PC-9 (cell line): ENCODE measurements at regions of chr20 and their contacts with region 1.

Region 1: GRCh38 chr20:47847868-47848531 is 62.7 kb upstream of the SULF2 start:
- DNase-seq: peak in 1 of 2 experiments; percentile 37
- H3K4me3 ChIP-seq: no peak overlapping the region
- H3K27ac ChIP-seq: peak overlapping the region; percentile 95
- H3K4me1 ChIP-seq: peaks cover 69% of the 10 kb centered on the region
- H3K27me3 ChIP-seq: no peaks in the 10 kb centered on the region
- CTCF ChIP-seq: no peak

Region 2: DNA sequence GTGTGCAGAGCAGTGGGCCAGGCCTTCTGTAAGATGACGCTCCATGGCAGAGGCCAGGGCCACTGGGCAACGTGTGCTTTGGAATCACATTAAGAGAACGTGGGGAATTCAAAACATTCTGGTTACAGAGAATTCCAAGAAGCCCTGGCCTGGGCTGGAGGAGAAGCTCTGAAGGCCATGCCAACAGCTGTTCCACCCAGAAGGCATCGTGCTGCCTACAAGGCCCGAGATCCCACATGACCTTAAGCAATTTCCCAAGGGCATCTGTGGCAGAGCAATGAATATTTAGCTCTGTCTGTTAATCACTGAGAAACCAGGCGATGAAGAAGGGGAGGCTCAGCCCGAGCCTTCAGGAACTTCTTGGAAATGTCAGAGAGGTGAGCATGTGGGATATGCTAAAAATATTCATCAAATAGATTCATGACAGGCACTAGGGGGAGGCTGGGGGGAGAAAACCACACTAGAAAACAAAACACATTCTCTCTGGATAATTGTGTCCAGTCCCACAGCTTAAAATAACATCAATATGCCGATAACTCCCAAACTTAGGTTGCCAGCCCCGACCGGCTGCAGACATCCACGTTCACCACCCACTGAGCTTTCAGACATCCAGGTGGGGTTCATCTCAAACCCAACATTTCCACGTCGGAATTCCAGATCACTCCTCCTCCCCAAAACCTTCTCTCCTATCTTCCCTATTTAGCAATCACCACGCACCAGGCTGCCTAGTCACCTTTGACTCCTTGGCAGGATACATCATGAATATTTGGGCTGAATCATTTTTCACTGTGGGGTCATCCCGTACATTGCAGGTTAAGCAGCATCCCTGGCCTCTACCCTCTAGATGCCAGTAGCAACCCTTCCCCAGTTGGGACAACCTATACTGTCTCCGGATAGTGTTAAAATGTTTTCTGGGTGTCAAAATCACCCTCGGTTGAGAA is 69.3 kb before region 1 on chr20:
- CTCF ChIA-PET with region 1: no interaction called
- POLR2A ChIA-PET with region 1: no interaction called
- intact Hi-C with region 1: no loop called
- DNase-seq: no peak
- H3K4me3 ChIP-seq: no peak overlapping the region
- H3K27ac ChIP-seq: no peak overlapping the region
- H3K4me1 ChIP-seq: peaks cover 46% of the 10 kb centered on the region
- H3K27me3 ChIP-seq: no peaks in the 10 kb centered on the region
- CTCF ChIP-seq: no peak

Region 3: DNA sequence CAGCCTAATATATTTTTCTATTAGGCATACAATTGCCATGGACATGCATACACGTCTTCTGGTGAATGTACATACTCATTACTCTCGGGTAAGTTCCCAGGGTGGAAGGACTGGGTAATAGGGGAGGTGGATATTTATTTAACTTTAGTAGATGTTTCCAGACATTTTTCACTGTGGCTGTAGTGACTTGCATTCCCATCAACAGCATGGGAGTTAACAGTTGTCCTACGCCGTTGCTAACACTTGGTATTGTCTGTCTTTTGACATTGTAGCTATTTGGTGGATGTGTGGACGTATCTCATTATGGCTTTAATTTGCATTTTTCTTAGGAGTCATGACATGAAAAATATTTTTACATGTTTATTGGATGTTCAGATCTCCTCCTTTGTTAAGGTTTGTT is 153.7 kb after region 1 on chr20:
- CTCF ChIA-PET with region 1: no interaction called
- POLR2A ChIA-PET with region 1: interaction called, 18 read pairs
- intact Hi-C with region 1: no loop called
- DNase-seq: no peak
- H3K4me3 ChIP-seq: no peak overlapping the region
- H3K27ac ChIP-seq: no peak overlapping the region
- H3K4me1 ChIP-seq: no peaks in the 10 kb centered on the region
- H3K27me3 ChIP-seq: no peaks in the 10 kb centered on the region
- CTCF ChIP-seq: no peak